ENCODE measurements at regions of chr1 and their contacts with region 1.

Region 1: DNA sequence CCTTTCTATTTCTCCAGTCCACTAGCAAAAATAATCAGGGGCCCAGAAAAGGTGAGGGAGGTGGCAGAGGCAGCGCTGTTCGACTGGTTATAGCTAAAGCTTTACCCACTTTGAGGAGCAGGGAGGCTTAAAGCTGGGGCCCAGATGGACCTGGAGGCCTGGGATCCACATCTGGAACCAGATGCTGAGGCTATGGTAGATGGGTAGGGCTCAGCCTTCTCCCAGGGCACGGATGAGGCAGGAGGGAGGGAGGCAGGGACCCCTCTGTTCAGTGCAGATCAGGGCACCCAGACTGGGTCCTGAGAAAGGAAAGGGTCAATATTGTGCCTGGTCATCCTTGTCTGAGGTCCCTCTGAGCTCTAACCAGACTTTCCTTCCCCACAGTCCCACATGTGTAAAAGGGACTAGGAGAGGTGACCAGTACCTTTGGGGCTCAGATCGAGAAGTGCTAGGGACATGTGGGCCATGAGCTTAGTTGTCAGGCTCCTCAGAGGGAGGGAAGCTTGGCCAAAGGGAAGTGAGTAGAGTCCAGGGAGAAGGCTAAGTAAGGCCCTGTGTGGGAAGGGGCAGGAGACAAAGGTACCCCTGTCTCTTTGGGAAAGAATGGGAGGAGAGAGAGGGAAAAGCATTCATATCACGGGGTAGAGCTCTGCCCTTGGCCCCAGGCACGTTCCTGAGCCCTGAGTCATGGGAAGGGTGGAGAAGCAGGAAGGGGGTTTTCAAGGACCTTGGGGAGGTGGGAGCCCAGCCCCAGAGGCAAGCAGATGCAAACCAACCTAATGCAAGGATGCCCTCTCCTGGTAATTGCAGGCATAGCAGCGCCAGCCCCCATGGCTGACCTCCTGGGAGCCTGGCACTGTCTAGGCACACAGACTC is 15.4 kb downstream of the LMNA start:
- DNase-seq: peak; percentile 89
- ATAC-seq: peak; percentile 27
- H3K4me3 Mint-ChIP-seq: no peak overlapping the region
- H3K27ac Mint-ChIP-seq: peak overlapping the region; percentile 49
- H3K4me1 Mint-ChIP-seq: peaks cover 54% of the 10 kb centered on the region
- H3K27me3 Mint-ChIP-seq: no peaks in the 10 kb centered on the region

Region 2: GRCh38 chr1:155794605-155795245 is 335.2 kb before region 1 on chr1:
- CTCF ChIA-PET with region 1: no interaction called
- POLR2A ChIA-PET with region 1: no interaction called
- intact Hi-C with region 1: no loop called
- DNase-seq: no peak
- ATAC-seq: no peak
- H3K4me3 Mint-ChIP-seq: no peak overlapping the region
- H3K27ac Mint-ChIP-seq: peak overlapping the region; percentile 9
- H3K4me1 Mint-ChIP-seq: no peaks in the 10 kb centered on the region
- H3K27me3 Mint-ChIP-seq: no peaks in the 10 kb centered on the region

Region 3: DNA sequence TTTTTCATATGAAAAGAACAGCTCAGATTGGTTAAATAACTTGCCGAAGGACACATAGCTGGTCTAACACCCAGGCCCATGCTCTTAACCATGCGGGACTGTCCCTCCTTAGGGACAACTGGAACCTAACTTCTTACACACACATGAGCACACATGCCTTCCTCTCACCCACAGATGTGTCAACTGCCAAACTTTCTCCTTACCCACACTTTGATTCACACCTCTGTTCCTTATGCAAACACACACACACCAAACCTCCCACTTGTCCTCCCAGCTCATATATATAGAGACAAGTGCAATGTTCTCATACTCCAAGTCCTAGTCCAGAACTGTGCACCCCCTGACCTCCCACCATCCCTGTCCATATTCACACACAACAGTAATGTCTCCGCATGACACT is 64.7 kb before region 1 on chr1:
- CTCF ChIA-PET with region 1: interaction called, 16 read pairs
- POLR2A ChIA-PET with region 1: no interaction called
- intact Hi-C with region 1: no loop called
- DNase-seq: peak; percentile 21
- ATAC-seq: peak; percentile 29
- H3K4me3 Mint-ChIP-seq: no peak overlapping the region
- H3K27ac Mint-ChIP-seq: no peak overlapping the region
- H3K4me1 Mint-ChIP-seq: peaks cover 14% of the 10 kb centered on the region
- H3K27me3 Mint-ChIP-seq: no peaks in the 10 kb centered on the region

Region 4: DNA sequence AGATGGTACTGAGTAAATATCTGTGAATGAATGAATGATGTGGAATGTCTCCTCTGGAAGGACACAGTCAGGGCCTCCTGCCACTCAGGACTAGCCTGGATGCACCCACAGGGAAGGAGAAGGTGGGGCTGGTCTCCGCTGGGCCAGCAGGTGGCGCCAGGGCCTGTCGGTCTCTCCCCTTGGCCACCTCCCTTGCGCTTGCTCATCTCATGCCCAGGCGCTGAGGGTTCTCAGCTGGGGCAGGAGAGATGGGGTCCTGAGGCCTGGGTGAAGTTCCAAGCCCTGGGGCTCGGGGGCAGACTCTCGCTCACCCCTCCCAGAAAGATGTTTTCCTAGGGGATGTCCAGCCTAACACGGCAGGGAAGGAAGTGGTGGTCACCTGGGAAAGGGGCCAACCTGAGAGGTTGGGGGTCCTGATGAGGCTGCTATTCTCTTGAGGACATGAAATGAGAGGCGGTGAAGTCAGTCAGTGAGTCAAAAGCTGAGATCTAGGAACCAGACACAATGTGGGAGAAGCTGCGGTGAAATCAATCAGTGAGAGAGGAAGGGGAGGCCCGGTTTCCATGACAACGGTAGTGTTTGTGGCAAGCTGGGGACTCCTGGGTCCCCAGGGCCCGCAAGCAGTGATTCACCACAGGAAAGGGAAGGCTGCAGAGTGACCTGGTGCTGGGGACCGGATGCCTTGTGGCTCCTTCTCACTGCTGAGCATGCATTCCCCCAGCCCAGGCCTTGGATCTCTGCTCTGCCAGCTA is 33.1 kb before region 1 on chr1:
- CTCF ChIA-PET with region 1: interaction called, 929 read pairs
- POLR2A ChIA-PET with region 1: interaction called, 103 read pairs
- intact Hi-C with region 1: loop called (anchors 1 kb)
- DNase-seq: peak; percentile 96
- ATAC-seq: peak; percentile 76
- H3K4me3 Mint-ChIP-seq: peak overlapping the region; percentile 60
- H3K27ac Mint-ChIP-seq: peak overlapping the region; percentile 94
- H3K4me1 Mint-ChIP-seq: peaks cover 58% of the 10 kb centered on the region
- H3K27me3 Mint-ChIP-seq: peaks cover 7% of the 10 kb centered on the region

Region 5: GRCh38 chr1:156114101-156114916 is 15.6 kb before region 1 on chr1 and contains the start of gene LMNA:
- CTCF ChIA-PET with region 1: interaction called, 929 read pairs
- POLR2A ChIA-PET with region 1: interaction called, 24 read pairs
- intact Hi-C with region 1: loop called (anchors 1 kb)
- DNase-seq: peak; percentile 90
- ATAC-seq: peak; percentile 91
- H3K4me3 Mint-ChIP-seq: peak within 1 kb of the TSS; percentile 93
- H3K27ac Mint-ChIP-seq: peak within 1 kb of the TSS; percentile 83
- H3K4me1 Mint-ChIP-seq: peaks cover 26% of the 10 kb centered on the region
- H3K27me3 Mint-ChIP-seq: peaks cover 19% of the 10 kb centered on the region
- total RNA-seq, gene LMNA: 184 to 218 TPM

Region 6: GRCh38 chr1:156212833-156213643 is 83.1 kb after region 1 on chr1 and contains the start of gene PMF1:
- CTCF ChIA-PET with region 1: interaction called, 3 read pairs
- POLR2A ChIA-PET with region 1: interaction called, 5 read pairs
- intact Hi-C with region 1: loop called in 1 of 2 experiments (anchors 1 kb)
- DNase-seq: peak; percentile 98
- ATAC-seq: peak; percentile 90
- H3K4me3 Mint-ChIP-seq: peak within 1 kb of the TSS; percentile 76
- H3K27ac Mint-ChIP-seq: peak within 1 kb of the TSS; percentile 98
- H3K4me1 Mint-ChIP-seq: peaks cover 41% of the 10 kb centered on the region
- H3K27me3 Mint-ChIP-seq: no peaks in the 10 kb centered on the region
- total RNA-seq, gene PMF1: 108 to 117 TPM

Measured in activated CD4-positive, alpha-beta T cell treated with anti-CD3 and anti-CD28 coated beads for 36 hours (primary cell).